PC-3 (cell line): ENCODE measurements at regions of chr12 and their contacts with region 1.

Region 1: GRCh38 chr12:51482929-51483697 is 58.5 kb downstream of the SLC4A8 start:
- DNase-seq: no peak
- ATAC-seq: no peak
- H3K4me3 ChIP-seq: no peak overlapping the region
- H3K27ac ChIP-seq: no peak overlapping the region
- H3K4me1 ChIP-seq: no peaks in the 10 kb centered on the region
- H3K27me3 ChIP-seq: no peaks in the 10 kb centered on the region
- CTCF ChIP-seq: 0 out of 2 replicates have a peak, but pooled peaks have one; percentile 20

Region 2: DNA sequence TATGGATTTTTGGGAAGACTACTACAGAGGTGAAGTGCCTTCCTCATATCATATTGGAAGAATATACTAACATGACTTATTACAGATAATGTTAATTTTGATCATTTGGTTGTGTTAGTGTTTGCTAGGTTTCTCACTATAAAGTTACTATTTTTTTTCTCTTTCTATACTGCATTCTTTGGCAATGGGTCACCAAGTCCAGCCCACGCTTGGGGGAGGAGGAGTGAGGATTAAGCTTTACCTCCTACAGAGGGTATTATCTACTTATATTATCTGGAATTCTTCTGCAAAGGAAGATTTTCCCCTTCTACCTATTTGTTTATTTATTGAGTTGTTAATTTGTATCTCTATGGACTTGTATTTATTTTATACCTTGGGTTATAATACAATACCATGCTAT is 139.5 kb after region 1 on chr12:
- CTCF ChIA-PET with region 1: no interaction called
- POLR2A ChIA-PET with region 1: no interaction called
- intact Hi-C with region 1: no loop called
- DNase-seq: peak; percentile 65
- ATAC-seq: peak; percentile 62
- H3K4me3 ChIP-seq: no peak overlapping the region
- H3K27ac ChIP-seq: peak overlapping the region; percentile 78
- H3K4me1 ChIP-seq: peaks cover 32% of the 10 kb centered on the region
- H3K27me3 ChIP-seq: no peaks in the 10 kb centered on the region
- CTCF ChIP-seq: no peak

Region 3: GRCh38 chr12:51714666-51715065 is 231.6 kb after region 1 on chr12:
- CTCF ChIA-PET with region 1: no interaction called
- POLR2A ChIA-PET with region 1: interaction called, 10 read pairs
- intact Hi-C with region 1: no loop called
- DNase-seq: peak; percentile 83
- ATAC-seq: peak; percentile 96
- H3K4me3 ChIP-seq: 0 out of 2 replicates have a peak overlapping the region, but pooled peaks have one; percentile 3
- H3K27ac ChIP-seq: peak overlapping the region; percentile 65
- H3K4me1 ChIP-seq: peaks cover 16% of the 10 kb centered on the region
- H3K27me3 ChIP-seq: no peaks in the 10 kb centered on the region
- CTCF ChIP-seq: no peak